Activated CD4-positive, alpha-beta T cell treated with anti-CD3 and anti-CD28 coated beads for 36 hours (primary cell): ENCODE measurements at regions of chr10 and their contacts with region 1.

Region 1: DNA sequence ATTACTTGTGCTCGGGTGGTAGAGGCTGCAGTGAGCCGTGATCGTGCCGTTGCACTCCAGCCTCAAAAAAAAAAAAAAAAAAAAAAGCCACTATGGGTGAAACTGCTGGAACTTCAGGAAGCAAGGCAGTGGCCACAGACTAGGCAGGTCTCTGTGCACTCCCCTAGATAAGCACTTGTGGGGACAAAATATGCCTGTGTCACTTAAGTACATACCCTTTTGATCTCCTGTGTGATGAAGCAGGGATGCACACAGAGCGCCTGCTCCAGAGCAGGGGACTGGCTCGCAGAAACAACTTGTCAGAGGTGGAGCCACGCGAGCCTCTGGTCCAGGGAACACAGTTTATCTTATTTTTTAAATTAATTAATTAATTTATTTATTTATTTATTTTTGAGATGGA is 42.9 kb upstream of the PSAP start:
- DNase-seq: no peak
- ATAC-seq: no peak
- H3K4me3 Mint-ChIP-seq: no peak overlapping the region
- H3K27ac Mint-ChIP-seq: no peak overlapping the region
- H3K4me1 Mint-ChIP-seq: peaks cover 6% of the 10 kb centered on the region
- H3K27me3 Mint-ChIP-seq: peaks cover 3% of the 10 kb centered on the region

Region 2: DNA sequence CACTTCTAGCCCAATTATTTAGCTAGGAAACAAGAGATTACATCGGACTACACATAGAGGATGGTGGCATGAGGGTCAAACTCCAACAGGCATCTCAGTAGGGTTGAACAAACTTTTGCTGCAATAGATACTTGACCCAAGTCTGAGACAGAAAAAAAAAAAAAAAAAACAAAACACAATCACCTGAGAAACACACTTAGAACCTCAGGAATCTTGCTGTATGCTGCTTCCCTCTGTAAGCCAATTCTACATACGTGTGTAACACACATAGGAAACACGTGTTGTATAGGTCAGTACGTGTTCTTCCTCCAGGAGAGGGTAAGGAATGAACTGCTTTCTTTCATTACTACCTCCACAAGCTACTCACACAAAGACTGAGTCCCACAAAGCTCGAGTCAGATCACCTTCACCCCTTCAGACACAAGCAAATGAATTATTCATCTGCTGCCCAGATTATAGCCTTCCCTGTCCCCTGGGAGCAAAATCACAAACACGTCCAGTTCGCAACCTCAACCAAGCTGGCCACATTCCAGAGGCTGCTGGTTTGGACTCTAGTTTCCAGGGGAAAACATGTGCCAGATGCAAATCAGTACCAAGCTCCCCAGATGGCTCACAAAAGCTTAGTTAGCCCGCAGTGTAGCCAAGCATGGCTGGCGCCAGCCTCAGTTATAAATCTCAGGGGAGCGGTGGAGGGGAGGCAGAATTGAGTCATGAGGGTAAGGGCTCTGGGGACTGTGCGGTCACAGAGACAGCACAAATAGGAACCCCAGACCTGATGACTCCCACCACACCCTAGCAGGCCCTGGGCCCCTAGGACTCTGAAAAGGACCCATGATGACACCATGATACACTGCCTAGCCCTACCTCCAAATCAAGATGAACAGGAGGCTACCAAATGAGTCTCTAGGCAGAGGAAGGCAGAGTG is 58.0 kb before region 1 on chr10:
- CTCF ChIA-PET with region 1: interaction called, 28 read pairs
- POLR2A ChIA-PET with region 1: no interaction called
- intact Hi-C with region 1: loop called in 1 of 2 experiments (anchors 2 kb)
- DNase-seq: no peak
- ATAC-seq: peak; percentile 59
- H3K4me3 Mint-ChIP-seq: no peak overlapping the region
- H3K27ac Mint-ChIP-seq: peak overlapping the region; percentile 31
- H3K4me1 Mint-ChIP-seq: peaks cover 51% of the 10 kb centered on the region
- H3K27me3 Mint-ChIP-seq: no peaks in the 10 kb centered on the region

Region 3: GRCh38 chr10:71878327-71879034 is 15.4 kb before region 1 on chr10:
- CTCF ChIA-PET with region 1: interaction called, 16 read pairs
- POLR2A ChIA-PET with region 1: no interaction called
- intact Hi-C with region 1: no loop called
- DNase-seq: peak; percentile 42
- ATAC-seq: peak; percentile 82
- H3K4me3 Mint-ChIP-seq: no peak overlapping the region
- H3K27ac Mint-ChIP-seq: no peak overlapping the region
- H3K4me1 Mint-ChIP-seq: peaks cover 24% of the 10 kb centered on the region
- H3K27me3 Mint-ChIP-seq: no peaks in the 10 kb centered on the region

Region 4: GRCh38 chr10:71905164-71905563 is 11.2 kb after region 1 on chr10:
- CTCF ChIA-PET with region 1: interaction called, 12 read pairs
- POLR2A ChIA-PET with region 1: no interaction called
- intact Hi-C with region 1: no loop called
- DNase-seq: no peak
- ATAC-seq: no peak
- H3K4me3 Mint-ChIP-seq: no peak overlapping the region
- H3K27ac Mint-ChIP-seq: no peak overlapping the region
- H3K4me1 Mint-ChIP-seq: peaks cover 4% of the 10 kb centered on the region
- H3K27me3 Mint-ChIP-seq: no peaks in the 10 kb centered on the region

Region 5: GRCh38 chr10:72542396-72542815 is 648.5 kb after region 1 on chr10:
- CTCF ChIA-PET with region 1: no interaction called
- POLR2A ChIA-PET with region 1: no interaction called
- intact Hi-C with region 1: no loop called
- DNase-seq: no peak
- ATAC-seq: no peak
- H3K4me3 Mint-ChIP-seq: no peak overlapping the region
- H3K27ac Mint-ChIP-seq: no peak overlapping the region
- H3K4me1 Mint-ChIP-seq: peaks cover 8% of the 10 kb centered on the region
- H3K27me3 Mint-ChIP-seq: no peaks in the 10 kb centered on the region